ENCODE measurements at regions of chr5 and their contacts with region 1.

Region 1: GRCh38 chr5:133938929-133939328 is 29.5 kb downstream of the C5orf15 start:
- DNase-seq: peak; percentile 86
- H3K4me3 ChIP-seq: peak overlapping the region; percentile 47
- H3K27ac ChIP-seq: peak overlapping the region; percentile 98
- H3K4me1 ChIP-seq: peaks cover 87% of the 10 kb centered on the region
- CTCF ChIP-seq: no peak; the same call in 1 of the 2 replicates

Region 2: GRCh38 chr5:133907075-133907474 is 31.9 kb before region 1 on chr5:
- CTCF ChIA-PET with region 1: no interaction called
- POLR2A ChIA-PET with region 1: interaction called, 15 read pairs
- intact Hi-C with region 1: loop called (anchors 1 kb)
- DNase-seq: no peak
- H3K4me3 ChIP-seq: no peak overlapping the region
- H3K27ac ChIP-seq: no peak overlapping the region
- H3K4me1 ChIP-seq: peaks cover 10% of the 10 kb centered on the region
- CTCF ChIP-seq: no peak

Region 3: DNA sequence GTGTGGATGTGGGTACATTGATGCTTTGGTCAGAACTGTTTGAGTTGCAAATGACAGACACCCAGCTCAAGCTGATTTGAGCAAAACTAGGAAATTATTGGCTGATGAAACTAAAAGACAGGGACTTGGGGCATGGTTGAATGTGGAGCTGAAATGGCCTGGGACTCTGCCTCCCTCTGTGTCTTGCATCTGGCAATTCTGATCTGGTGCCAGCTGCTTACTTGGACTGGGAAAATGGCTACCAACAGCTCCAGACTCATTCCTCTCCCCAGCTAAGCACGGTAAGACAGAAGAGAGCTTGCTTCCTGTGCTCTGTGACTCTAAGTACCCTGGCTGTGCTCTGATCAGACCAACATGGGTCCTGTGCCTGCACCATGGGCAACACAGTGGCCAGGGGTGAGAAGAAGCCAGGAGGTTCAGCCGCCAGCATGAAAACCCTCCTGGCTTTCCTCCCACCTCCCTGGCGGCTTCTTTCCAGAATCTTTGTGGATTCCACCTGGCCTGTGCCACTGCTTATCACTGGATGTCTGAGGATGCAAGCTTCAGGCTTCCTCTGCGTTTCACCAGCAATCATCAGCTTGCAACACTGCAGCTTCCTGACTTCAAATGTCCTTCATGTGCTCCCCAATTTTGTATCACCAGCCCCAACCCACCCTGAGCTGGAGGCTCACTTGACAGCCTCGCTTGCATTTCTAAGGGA is 14.6 kb before region 1 on chr5:
- CTCF ChIA-PET with region 1: interaction called, 9 read pairs
- POLR2A ChIA-PET with region 1: interaction called, 30 read pairs
- intact Hi-C with region 1: no loop called
- DNase-seq: peak; percentile 54
- H3K4me3 ChIP-seq: peak overlapping the region; percentile 5
- H3K27ac ChIP-seq: peak overlapping the region; percentile 43
- H3K4me1 ChIP-seq: peaks cover 97% of the 10 kb centered on the region
- CTCF ChIP-seq: no peak